ENCODE measurements at regions of chr7 and their contacts with region 1.

Region 1: GRCh38 chr7:102279537-102280400 is 6.9 kb upstream of the SH2B2 start:
- DNase-seq: peak in 4 of 10 donors; percentile 32 to 75 (median 60)
- H3K4me3 ChIP-seq: peak overlapping the region in 2 of 59 donors; percentile 12 to 29
- H3K27ac ChIP-seq: no peak overlapping the region
- H3K27me3 ChIP-seq: no peaks in the 10 kb centered on the region
- CTCF ChIP-seq: peak; percentile 41 to 96 (median 84)

Region 2: GRCh38 chr7:101542527-101543241 is 737.1 kb before region 1 on chr7:
- intact Hi-C with region 1: loop called in 1 of 2 experiments (anchors 10 kb)
- DNase-seq: peak in 9 of 10 donors; percentile 55 to 81 (median 70)
- H3K4me3 ChIP-seq: no peak overlapping the region
- H3K27ac ChIP-seq: no peak overlapping the region
- H3K27me3 ChIP-seq: no peaks in the 10 kb centered on the region
- CTCF ChIP-seq: peak; percentile 73 to 95 (median 87)

Region 3: DNA sequence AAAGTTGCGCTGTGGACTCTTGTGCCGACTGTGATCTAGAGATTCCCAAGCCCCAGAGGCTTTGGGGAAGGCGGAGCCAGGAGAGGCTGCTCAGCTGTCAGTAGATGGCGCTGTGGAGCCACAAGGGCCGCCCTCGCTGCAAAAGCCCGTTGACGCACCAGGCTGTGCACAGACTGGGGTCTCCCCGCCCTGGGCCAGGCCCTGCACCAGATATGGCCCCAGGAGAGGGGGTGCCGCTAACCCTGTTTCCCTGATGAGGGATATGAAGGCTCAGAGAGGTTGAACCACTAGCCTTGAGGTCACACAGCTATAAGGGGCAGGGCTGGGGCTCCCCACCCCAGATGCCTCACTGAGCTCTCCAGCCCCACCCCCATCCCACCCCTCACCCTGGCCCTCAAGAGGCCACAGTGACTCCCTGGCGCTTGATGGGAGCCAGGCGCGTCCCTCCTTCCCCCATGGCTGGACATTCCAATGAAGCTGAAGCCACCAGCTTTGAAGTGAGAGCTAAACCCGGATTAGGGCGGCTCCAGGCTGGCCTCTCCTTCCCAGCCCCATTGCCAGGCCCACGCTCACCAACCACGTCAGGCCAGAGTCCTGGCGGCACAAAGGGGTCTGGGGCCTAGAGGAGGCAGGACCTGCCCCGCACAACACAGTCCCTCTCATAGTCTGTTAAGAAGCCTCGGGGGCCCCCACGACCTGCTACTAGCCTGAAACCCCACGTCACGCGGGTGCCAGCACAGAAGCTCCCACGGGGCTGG is 677.1 kb before region 1 on chr7:
- intact Hi-C with region 1: loop called in 1 of 2 experiments (anchors 10 kb)
- DNase-seq: peak; percentile 58 to 84 (median 74)
- H3K4me3 ChIP-seq: peak overlapping the region in 3 of 59 donors; percentile 4 to 18 (median 13)
- H3K27ac ChIP-seq: no peak overlapping the region
- H3K27me3 ChIP-seq: peaks cover 0 to 4% (median 0%) of the 10 kb centered on the region in 45 donors
- CTCF ChIP-seq: peak; percentile 25 to 89 (median 79)

Region 4: GRCh38 chr7:102390697-102391484 is 111.1 kb after region 1 on chr7:
- intact Hi-C with region 1: loop called (anchors 1 to 2 kb)
- DNase-seq: peak; percentile 69 to 85 (median 81)
- H3K4me3 ChIP-seq: no peak overlapping the region
- H3K27ac ChIP-seq: no peak overlapping the region
- H3K27me3 ChIP-seq: no peaks in the 10 kb centered on the region
- CTCF ChIP-seq: peak; percentile 81 to 98 (median 94)

Region 5: GRCh38 chr7:102464577-102465280 is 185.0 kb after region 1 on chr7 and contains the starts of genes ALKBH4 and LRWD1:
- intact Hi-C with region 1: loop called in 1 of 2 experiments (anchors 5 kb)
- DNase-seq: peak; percentile 80 to 95 (median 91)
- H3K4me3 ChIP-seq: peak within 1 kb of the TSS; percentile 51 to 100 (median 98)
- H3K27ac ChIP-seq: peak within 1 kb of the TSS in 54 of 59 donors; percentile 25 to 94 (median 80)
- H3K27me3 ChIP-seq: no peaks in the 10 kb centered on the region
- CTCF ChIP-seq: peak in 55 of 56 donors; percentile 17 to 75 (median 55)
- total RNA-seq, gene ALKBH4: 10.9 to 25.9 (median 16.9) TPM
- total RNA-seq, gene LRWD1: 14.1 to 36.1 (median 21.8) TPM